ENCODE measurements at regions of chr1 and their contacts with region 1.

Region 1: GRCh38 chr1:158506369-158506987 is 34.5 kb downstream of the OR10R2 start:
- H3K4me3 Mint-ChIP-seq: no peak overlapping the region
- H3K27ac Mint-ChIP-seq: no peak overlapping the region
- H3K4me1 Mint-ChIP-seq: peaks cover 20% of the 10 kb centered on the region
- H3K27me3 Mint-ChIP-seq: peaks cover 2% of the 10 kb centered on the region

Region 2: GRCh38 chr1:158577561-158577960 is 71.1 kb after region 1 on chr1:
- intact Hi-C with region 1: no loop called
- H3K4me3 Mint-ChIP-seq: no peak overlapping the region
- H3K27ac Mint-ChIP-seq: no peak overlapping the region
- H3K4me1 Mint-ChIP-seq: no peaks in the 10 kb centered on the region
- H3K27me3 Mint-ChIP-seq: no peaks in the 10 kb centered on the region

Region 3: DNA sequence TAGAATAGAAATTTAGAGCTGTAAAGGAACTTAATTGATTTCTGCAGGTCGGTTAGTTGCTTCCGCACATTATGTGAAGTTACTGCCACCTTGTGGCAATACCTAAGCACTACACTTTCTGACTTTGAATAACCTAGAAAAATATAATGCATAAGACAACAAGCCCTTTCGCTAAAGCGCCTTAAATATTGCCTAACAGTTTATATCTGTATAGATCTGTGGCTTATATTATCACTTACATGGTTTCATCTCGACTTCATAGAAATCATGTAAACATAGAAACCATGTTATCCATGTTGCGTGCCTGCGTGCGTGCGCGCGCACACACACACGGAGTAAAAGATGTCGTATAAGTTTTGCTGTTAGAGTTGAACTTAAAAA is 492.3 kb after region 1 on chr1:
- intact Hi-C with region 1: loop called (anchors 1 kb)
- H3K4me3 Mint-ChIP-seq: no peak overlapping the region
- H3K27ac Mint-ChIP-seq: peak overlapping the region; percentile 40
- H3K4me1 Mint-ChIP-seq: peaks cover 28% of the 10 kb centered on the region
- H3K27me3 Mint-ChIP-seq: no peaks in the 10 kb centered on the region

Measured in dendritic cell treated with granulocyte-macrophage colony-stimulating factor and Interleukin-4, amounts not matched to agents 40 ng/mL and 50 ng/mL, for 4 days (primary cell).